Activated B cell treated with CpG ODN at 0.5 μM for 24 hours (primary cell): ENCODE measurements at regions of chr12 and their contacts with region 1.

Region 1: GRCh38 chr12:47307680-47308399 is 228.1 kb upstream of the AMIGO2 start:
- DNase-seq: peak; percentile 33
- ATAC-seq: peak; percentile 88
- H3K4me3 Mint-ChIP-seq: peak overlapping the region; percentile 95
- H3K27ac Mint-ChIP-seq: peak overlapping the region; percentile 94
- H3K4me1 Mint-ChIP-seq: peaks cover 67% of the 10 kb centered on the region
- H3K27me3 Mint-ChIP-seq: no peaks in the 10 kb centered on the region
- CTCF ChIP-seq: peak; percentile 36

Region 2: DNA sequence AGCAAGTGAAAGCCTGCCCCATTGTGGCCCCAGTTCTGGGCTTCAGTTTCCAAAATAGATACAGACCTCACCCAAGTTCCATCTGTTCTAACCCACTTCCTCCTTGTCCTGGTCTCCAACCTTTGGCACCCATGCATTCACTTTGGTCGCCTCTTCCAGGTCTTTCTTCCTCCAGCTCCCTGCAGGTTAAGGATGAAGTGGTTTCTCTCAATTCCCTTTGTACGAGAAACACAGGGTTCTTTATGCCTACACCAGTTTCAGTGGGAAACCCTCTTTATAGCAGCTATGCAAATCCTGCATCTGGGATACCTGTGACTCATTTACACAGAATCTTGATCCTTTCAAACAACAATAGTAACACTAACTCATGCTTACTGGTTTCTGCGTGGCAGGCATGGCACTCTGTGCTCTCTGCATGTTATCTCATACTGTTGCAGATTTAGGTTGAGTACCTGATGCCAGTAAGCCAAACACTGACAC is 117.5 kb before region 1 on chr12:
- CTCF ChIA-PET with region 1: interaction called, 3 read pairs
- POLR2A ChIA-PET with region 1: interaction called, 10 read pairs
- intact Hi-C with region 1: no loop called
- DNase-seq: no peak
- ATAC-seq: peak; percentile 25
- H3K4me3 Mint-ChIP-seq: peak overlapping the region; percentile 45
- H3K27ac Mint-ChIP-seq: peak overlapping the region; percentile 86
- H3K4me1 Mint-ChIP-seq: peaks cover 75% of the 10 kb centered on the region
- H3K27me3 Mint-ChIP-seq: no peaks in the 10 kb centered on the region
- CTCF ChIP-seq: no peak

Region 3: GRCh38 chr12:47247433-47247832 is 60.4 kb before region 1 on chr12:
- CTCF ChIA-PET with region 1: no interaction called
- POLR2A ChIA-PET with region 1: no interaction called
- intact Hi-C with region 1: no loop called
- DNase-seq: no peak
- ATAC-seq: no peak
- H3K4me3 Mint-ChIP-seq: no peak overlapping the region
- H3K27ac Mint-ChIP-seq: no peak overlapping the region
- H3K4me1 Mint-ChIP-seq: peaks cover 2% of the 10 kb centered on the region
- H3K27me3 Mint-ChIP-seq: no peaks in the 10 kb centered on the region
- CTCF ChIP-seq: no peak

Region 4: GRCh38 chr12:47268501-47269454 is 39.1 kb before region 1 on chr12:
- CTCF ChIA-PET with region 1: interaction called, 3 read pairs
- POLR2A ChIA-PET with region 1: interaction called, 12 read pairs
- intact Hi-C with region 1: no loop called
- DNase-seq: no peak
- ATAC-seq: peak; percentile 73
- H3K4me3 Mint-ChIP-seq: peak overlapping the region; percentile 62
- H3K27ac Mint-ChIP-seq: peak overlapping the region; percentile 96
- H3K4me1 Mint-ChIP-seq: peaks cover 59% of the 10 kb centered on the region
- H3K27me3 Mint-ChIP-seq: no peaks in the 10 kb centered on the region
- CTCF ChIP-seq: no peak

Region 5: DNA sequence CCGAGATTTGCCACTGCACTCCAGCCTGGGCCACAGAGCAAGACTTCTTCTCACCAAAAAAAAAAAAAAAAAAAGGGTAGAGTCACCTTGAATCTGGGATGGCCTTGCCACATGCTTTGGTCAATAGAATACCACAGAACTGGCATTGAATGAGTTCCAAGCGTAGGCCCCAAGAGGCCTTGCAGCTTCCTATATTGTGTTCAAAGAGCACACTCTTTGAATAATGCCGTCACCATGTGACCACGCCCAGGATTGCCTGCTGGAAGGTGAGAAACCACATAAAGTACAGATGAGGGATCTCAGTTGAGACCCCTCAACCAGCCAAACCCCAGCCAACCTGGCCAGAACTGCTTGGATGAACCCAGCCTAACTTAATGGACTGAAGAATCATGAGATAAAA is 11.1 kb after region 1 on chr12:
- CTCF ChIA-PET with region 1: no interaction called
- POLR2A ChIA-PET with region 1: interaction called, 11 read pairs
- intact Hi-C with region 1: no loop called
- DNase-seq: no peak
- ATAC-seq: no peak
- H3K4me3 Mint-ChIP-seq: no peak overlapping the region
- H3K27ac Mint-ChIP-seq: peak overlapping the region; percentile 65
- H3K4me1 Mint-ChIP-seq: peaks cover 55% of the 10 kb centered on the region
- H3K27me3 Mint-ChIP-seq: no peaks in the 10 kb centered on the region
- CTCF ChIP-seq: no peak

Region 6: DNA sequence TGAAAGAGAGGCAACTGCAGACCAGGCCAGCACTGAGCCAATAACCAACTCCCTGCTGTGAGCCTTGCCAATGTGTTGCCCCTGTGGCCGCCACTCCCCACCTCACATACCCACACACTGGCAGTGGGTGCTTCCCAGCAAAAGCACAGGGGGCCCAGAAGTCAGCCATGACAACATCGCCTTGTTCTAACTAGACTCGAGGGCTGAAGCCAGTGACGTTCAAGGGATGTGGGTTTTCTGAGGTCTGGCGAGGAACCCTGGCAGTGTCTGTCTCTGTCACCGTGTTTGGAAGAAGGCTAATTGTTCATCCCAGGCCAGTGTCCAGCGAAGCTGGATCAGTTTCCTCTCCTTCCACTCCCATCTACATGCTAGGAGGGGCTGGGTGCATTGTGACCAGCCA is 83.7 kb after region 1 on chr12:
- CTCF ChIA-PET with region 1: interaction called, 59 read pairs
- POLR2A ChIA-PET with region 1: interaction called, 81 read pairs
- intact Hi-C with region 1: no loop called
- DNase-seq: no peak
- ATAC-seq: peak; percentile 45
- H3K4me3 Mint-ChIP-seq: peak overlapping the region; percentile 15
- H3K27ac Mint-ChIP-seq: peak overlapping the region; percentile 100
- H3K4me1 Mint-ChIP-seq: peaks cover 83% of the 10 kb centered on the region
- H3K27me3 Mint-ChIP-seq: no peaks in the 10 kb centered on the region
- CTCF ChIP-seq: no peak

Region 7: GRCh38 chr12:47433876-47434275 is 126.0 kb after region 1 on chr12:
- CTCF ChIA-PET with region 1: no interaction called
- POLR2A ChIA-PET with region 1: no interaction called
- intact Hi-C with region 1: no loop called
- DNase-seq: no peak
- ATAC-seq: no peak
- H3K4me3 Mint-ChIP-seq: no peak overlapping the region
- H3K27ac Mint-ChIP-seq: no peak overlapping the region
- H3K4me1 Mint-ChIP-seq: no peaks in the 10 kb centered on the region
- H3K27me3 Mint-ChIP-seq: no peaks in the 10 kb centered on the region
- CTCF ChIP-seq: no peak

Region 8: GRCh38 chr12:47551426-47551851 is 243.6 kb after region 1 on chr12:
- CTCF ChIA-PET with region 1: no interaction called
- POLR2A ChIA-PET with region 1: no interaction called
- intact Hi-C with region 1: no loop called
- DNase-seq: no peak
- ATAC-seq: no peak
- H3K4me3 Mint-ChIP-seq: no peak overlapping the region
- H3K27ac Mint-ChIP-seq: no peak overlapping the region
- H3K4me1 Mint-ChIP-seq: no peaks in the 10 kb centered on the region
- H3K27me3 Mint-ChIP-seq: no peaks in the 10 kb centered on the region
- CTCF ChIP-seq: no peak